Caco-2 (cell line): ENCODE measurements at regions of chr7 and their contacts with region 1.

Region 1: GRCh38 chr7:104415700-104416099 is 87.3 kb downstream of the LHFPL3 start:
- DNase-seq: peak in 1 of 2 experiments; percentile 14
- H3K4me3 ChIP-seq: no peak overlapping the region
- H3K4me3 Mint-ChIP-seq: no peak overlapping the region
- H3K27ac Mint-ChIP-seq: no peak overlapping the region
- H3K4me1 ChIP-seq: no peaks in the 10 kb centered on the region
- H3K4me1 Mint-ChIP-seq: no peaks in the 10 kb centered on the region
- H3K27me3 ChIP-seq: no peaks in the 10 kb centered on the region
- H3K27me3 Mint-ChIP-seq: peaks cover 5% of the 10 kb centered on the region
- CTCF ChIP-seq: peak in 1 of 2 experiments; percentile 30

Region 2: DNA sequence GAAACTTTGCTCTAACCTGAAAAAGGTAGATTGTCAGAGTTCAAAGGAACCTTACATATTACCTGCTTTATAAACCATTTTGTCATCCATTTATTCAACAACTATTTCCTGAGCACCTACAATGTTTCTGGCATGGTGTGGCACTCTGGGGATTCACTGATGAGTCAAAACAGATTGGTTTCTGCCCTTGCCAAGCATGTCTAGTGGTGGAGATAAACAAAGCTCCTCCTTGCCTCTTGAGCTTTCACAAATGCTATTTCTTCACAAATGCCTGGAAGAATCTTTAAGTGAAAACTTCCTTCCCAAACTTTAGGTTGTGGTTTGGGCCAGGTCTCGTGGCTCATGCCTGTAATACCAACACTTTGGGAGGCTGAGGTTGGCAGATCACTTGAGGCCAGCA is 341.2 kb before region 1 on chr7:
- CTCF ChIA-PET with region 1: no interaction called
- POLR2A ChIA-PET with region 1: no interaction called
- intact Hi-C with region 1: no loop called
- DNase-seq: no peak
- H3K4me3 ChIP-seq: no peak overlapping the region
- H3K4me3 Mint-ChIP-seq: no peak overlapping the region
- H3K27ac Mint-ChIP-seq: no peak overlapping the region
- H3K4me1 ChIP-seq: no peaks in the 10 kb centered on the region
- H3K4me1 Mint-ChIP-seq: no peaks in the 10 kb centered on the region
- H3K27me3 ChIP-seq: no peaks in the 10 kb centered on the region
- H3K27me3 Mint-ChIP-seq: no peaks in the 10 kb centered on the region
- CTCF ChIP-seq: no peak

Region 3: GRCh38 chr7:104272767-104273384 is 142.8 kb before region 1 on chr7:
- CTCF ChIA-PET with region 1: no interaction called
- POLR2A ChIA-PET with region 1: no interaction called
- intact Hi-C with region 1: loop called (anchors 5 kb)
- DNase-seq: peak in 1 of 2 experiments; percentile 24
- H3K4me3 ChIP-seq: no peak overlapping the region
- H3K4me3 Mint-ChIP-seq: no peak overlapping the region
- H3K27ac Mint-ChIP-seq: no peak overlapping the region
- H3K4me1 ChIP-seq: no peaks in the 10 kb centered on the region
- H3K4me1 Mint-ChIP-seq: no peaks in the 10 kb centered on the region
- H3K27me3 ChIP-seq: no peaks in the 10 kb centered on the region
- H3K27me3 Mint-ChIP-seq: peaks cover 15% of the 10 kb centered on the region
- CTCF ChIP-seq: peak; percentile 58 to 62

Region 4: GRCh38 chr7:104351012-104351411 is 64.7 kb before region 1 on chr7:
- CTCF ChIA-PET with region 1: no interaction called
- POLR2A ChIA-PET with region 1: no interaction called
- intact Hi-C with region 1: no loop called
- DNase-seq: no peak
- H3K4me3 ChIP-seq: no peak overlapping the region
- H3K4me3 Mint-ChIP-seq: no peak overlapping the region
- H3K27ac Mint-ChIP-seq: no peak overlapping the region
- H3K4me1 ChIP-seq: no peaks in the 10 kb centered on the region
- H3K4me1 Mint-ChIP-seq: no peaks in the 10 kb centered on the region
- H3K27me3 ChIP-seq: no peaks in the 10 kb centered on the region
- H3K27me3 Mint-ChIP-seq: peaks cover 5% of the 10 kb centered on the region
- CTCF ChIP-seq: no peak

Region 5: GRCh38 chr7:104444017-104444416 is 28.3 kb after region 1 on chr7:
- CTCF ChIA-PET with region 1: no interaction called
- POLR2A ChIA-PET with region 1: no interaction called
- intact Hi-C with region 1: no loop called
- DNase-seq: no peak
- H3K4me3 ChIP-seq: no peak overlapping the region
- H3K4me3 Mint-ChIP-seq: no peak overlapping the region
- H3K27ac Mint-ChIP-seq: no peak overlapping the region
- H3K4me1 ChIP-seq: no peaks in the 10 kb centered on the region
- H3K4me1 Mint-ChIP-seq: no peaks in the 10 kb centered on the region
- H3K27me3 ChIP-seq: no peaks in the 10 kb centered on the region
- H3K27me3 Mint-ChIP-seq: peaks cover 7% of the 10 kb centered on the region
- CTCF ChIP-seq: no peak

Region 6: GRCh38 chr7:104791080-104791479 is 375.4 kb after region 1 on chr7:
- CTCF ChIA-PET with region 1: no interaction called
- POLR2A ChIA-PET with region 1: no interaction called
- intact Hi-C with region 1: no loop called
- DNase-seq: no peak
- H3K4me3 ChIP-seq: no peak overlapping the region
- H3K4me3 Mint-ChIP-seq: no peak overlapping the region
- H3K27ac Mint-ChIP-seq: no peak overlapping the region
- H3K4me1 ChIP-seq: no peaks in the 10 kb centered on the region
- H3K4me1 Mint-ChIP-seq: no peaks in the 10 kb centered on the region
- H3K27me3 ChIP-seq: no peaks in the 10 kb centered on the region; the same call in 1 of the 2 replicates
- H3K27me3 Mint-ChIP-seq: peaks cover 17% of the 10 kb centered on the region
- CTCF ChIP-seq: no peak